ENCODE measurements at regions of chr3 and their contacts with region 1.

Region 1: GRCh38 chr3:8111069-8111798 is 390.4 kb upstream of the LMCD1 start:
- DNase-seq: peak; percentile 19 to 72 (median 38)
- ATAC-seq: peak; percentile 82
- H3K4me3 ChIP-seq: no peak overlapping the region
- H3K4me3 Mint-ChIP-seq: peak overlapping the region; percentile 13
- H3K27ac ChIP-seq: no peak overlapping the region
- H3K27ac Mint-ChIP-seq: no peak overlapping the region
- H3K4me1 ChIP-seq: peaks cover 5% of the 10 kb centered on the region
- H3K4me1 Mint-ChIP-seq: peaks cover 7% of the 10 kb centered on the region
- H3K27me3 ChIP-seq: no peaks in the 10 kb centered on the region
- H3K27me3 Mint-ChIP-seq: peaks cover 11% of the 10 kb centered on the region
- CTCF ChIP-seq: peak; percentile 73

Region 2: GRCh38 chr3:7800006-7800780 is 311.0 kb before region 1 on chr3:
- CTCF ChIA-PET with region 1: interaction called, 7 read pairs
- POLR2A ChIA-PET with region 1: interaction called, 5 read pairs
- intact Hi-C with region 1: loop called (anchors 1 to 2 kb)
- DNase-seq: peak in 3 of 14 experiments; percentile 23 to 33 (median 26)
- ATAC-seq: no peak
- H3K4me3 ChIP-seq: no peak overlapping the region
- H3K4me3 Mint-ChIP-seq: no peak overlapping the region
- H3K27ac ChIP-seq: no peak overlapping the region
- H3K27ac Mint-ChIP-seq: no peak overlapping the region
- H3K4me1 ChIP-seq: no peaks in the 10 kb centered on the region
- H3K4me1 Mint-ChIP-seq: no peaks in the 10 kb centered on the region
- H3K27me3 ChIP-seq: no peaks in the 10 kb centered on the region
- H3K27me3 Mint-ChIP-seq: no peaks in the 10 kb centered on the region
- CTCF ChIP-seq: peak; percentile 45

Region 3: GRCh38 chr3:7999384-7999783 is 111.8 kb before region 1 on chr3:
- CTCF ChIA-PET with region 1: no interaction called
- POLR2A ChIA-PET with region 1: no interaction called
- intact Hi-C with region 1: no loop called
- DNase-seq: no peak
- ATAC-seq: no peak
- H3K4me3 ChIP-seq: no peak overlapping the region
- H3K4me3 Mint-ChIP-seq: no peak overlapping the region
- H3K27ac ChIP-seq: no peak overlapping the region
- H3K27ac Mint-ChIP-seq: no peak overlapping the region
- H3K4me1 ChIP-seq: no peaks in the 10 kb centered on the region
- H3K4me1 Mint-ChIP-seq: no peaks in the 10 kb centered on the region
- H3K27me3 ChIP-seq: no peaks in the 10 kb centered on the region
- H3K27me3 Mint-ChIP-seq: peaks cover 3% of the 10 kb centered on the region
- CTCF ChIP-seq: no peak

Region 4: DNA sequence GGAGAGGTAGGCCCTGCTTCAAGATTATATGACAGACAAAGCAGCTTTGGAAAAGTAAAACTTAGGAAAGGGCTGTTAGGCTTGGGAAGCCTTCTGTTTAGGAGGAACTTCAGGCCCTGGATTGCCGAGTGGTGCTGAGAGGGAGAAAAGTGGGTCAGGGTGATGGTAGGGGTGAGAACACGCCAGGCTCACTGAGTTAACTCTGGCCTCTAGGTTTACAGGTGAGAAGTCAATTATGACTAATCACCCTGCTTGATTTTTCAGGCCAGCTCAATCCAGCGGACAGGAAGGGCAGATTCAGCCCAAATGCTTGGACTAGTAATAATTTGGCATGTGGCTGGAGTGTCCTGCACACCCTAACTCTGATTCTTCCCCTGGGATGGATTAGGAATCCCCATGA is 25.3 kb after region 1 on chr3:
- CTCF ChIA-PET with region 1: no interaction called
- POLR2A ChIA-PET with region 1: no interaction called
- intact Hi-C with region 1: no loop called
- DNase-seq: no peak
- ATAC-seq: no peak
- H3K4me3 ChIP-seq: no peak overlapping the region
- H3K4me3 Mint-ChIP-seq: no peak overlapping the region
- H3K27ac ChIP-seq: no peak overlapping the region
- H3K27ac Mint-ChIP-seq: no peak overlapping the region
- H3K4me1 ChIP-seq: no peaks in the 10 kb centered on the region
- H3K4me1 Mint-ChIP-seq: no peaks in the 10 kb centered on the region
- H3K27me3 ChIP-seq: no peaks in the 10 kb centered on the region
- H3K27me3 Mint-ChIP-seq: no peaks in the 10 kb centered on the region
- CTCF ChIP-seq: no peak

Region 5: GRCh38 chr3:8220291-8220690 is 109.1 kb after region 1 on chr3:
- CTCF ChIA-PET with region 1: no interaction called
- POLR2A ChIA-PET with region 1: no interaction called
- intact Hi-C with region 1: no loop called
- DNase-seq: no peak
- ATAC-seq: no peak
- H3K4me3 ChIP-seq: no peak overlapping the region
- H3K4me3 Mint-ChIP-seq: no peak overlapping the region
- H3K27ac ChIP-seq: no peak overlapping the region
- H3K27ac Mint-ChIP-seq: no peak overlapping the region
- H3K4me1 ChIP-seq: no peaks in the 10 kb centered on the region
- H3K4me1 Mint-ChIP-seq: no peaks in the 10 kb centered on the region
- H3K27me3 ChIP-seq: no peaks in the 10 kb centered on the region
- H3K27me3 Mint-ChIP-seq: peaks cover 11% of the 10 kb centered on the region
- CTCF ChIP-seq: no peak

Measured in CD4-positive, alpha-beta T cell (primary cell).